Activated naive CD4-positive, alpha-beta T cell treated with anti-CD3 and anti-CD28 coated beads for 36 hours (primary cell): ENCODE measurements at regions of chr18 and their contacts with region 1.

Region 1: GRCh38 chr18:54149078-54149697 is 75.3 kb downstream of the MBD2 start:
- DNase-seq: peak; percentile 92
- H3K4me3 Mint-ChIP-seq: peak overlapping the region; percentile 35
- H3K27ac Mint-ChIP-seq: peak overlapping the region; percentile 97
- H3K4me1 Mint-ChIP-seq: peaks cover 45% of the 10 kb centered on the region
- H3K27me3 Mint-ChIP-seq: no peaks in the 10 kb centered on the region

Region 2: GRCh38 chr18:54086046-54086802 is 63.0 kb before region 1 on chr18:
- CTCF ChIA-PET with region 1: no interaction called
- intact Hi-C with region 1: loop called (anchors 1 kb)
- DNase-seq: peak; percentile 26
- H3K4me3 Mint-ChIP-seq: no peak overlapping the region
- H3K27ac Mint-ChIP-seq: no peak overlapping the region
- H3K4me1 Mint-ChIP-seq: peaks cover 15% of the 10 kb centered on the region
- H3K27me3 Mint-ChIP-seq: no peaks in the 10 kb centered on the region

Region 3: GRCh38 chr18:54163453-54163852 is 14.3 kb after region 1 on chr18:
- CTCF ChIA-PET with region 1: interaction called, 3 read pairs
- intact Hi-C with region 1: loop called (anchors 1 kb)
- DNase-seq: no peak
- H3K4me3 Mint-ChIP-seq: no peak overlapping the region
- H3K27ac Mint-ChIP-seq: peak overlapping the region; percentile 87
- H3K4me1 Mint-ChIP-seq: peaks cover 21% of the 10 kb centered on the region
- H3K27me3 Mint-ChIP-seq: no peaks in the 10 kb centered on the region

Region 4: DNA sequence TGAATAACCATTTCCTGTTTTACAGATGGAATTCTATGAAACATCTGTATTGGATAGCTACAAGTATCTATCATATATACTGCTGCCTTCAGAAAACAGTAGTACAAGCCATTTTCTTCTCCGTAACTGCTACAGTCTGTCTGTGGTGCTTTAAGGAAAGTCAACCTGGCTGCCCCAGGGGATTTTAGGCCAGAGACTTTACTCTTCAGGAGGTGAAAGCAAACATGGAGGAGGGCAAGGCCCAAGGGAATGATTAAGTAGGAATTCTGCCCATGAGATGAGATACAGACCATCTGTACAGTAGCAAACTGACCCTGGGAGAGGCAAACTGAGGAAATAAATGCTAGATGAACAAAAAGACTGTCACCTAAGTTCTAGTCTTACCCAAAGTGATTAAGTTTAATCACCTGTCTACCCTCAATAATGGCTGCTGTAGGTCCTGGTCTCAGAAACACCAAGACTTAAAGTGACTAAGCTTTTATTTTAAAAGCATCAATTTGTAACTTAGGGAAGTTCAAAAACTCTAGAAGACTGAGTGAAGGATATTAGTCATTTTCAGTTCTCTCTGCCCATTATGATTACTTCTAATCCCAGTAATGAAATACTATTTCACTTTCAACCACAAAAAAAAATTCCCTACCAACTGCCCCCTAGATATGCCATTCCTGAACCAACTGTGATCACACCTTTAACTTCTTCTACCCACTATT is 60.4 kb after region 1 on chr18:
- CTCF ChIA-PET with region 1: interaction called, 3 read pairs
- intact Hi-C with region 1: loop called (anchors 1 kb)
- DNase-seq: no peak
- H3K4me3 Mint-ChIP-seq: peak overlapping the region; percentile 50
- H3K27ac Mint-ChIP-seq: peak overlapping the region; percentile 88
- H3K4me1 Mint-ChIP-seq: peaks cover 54% of the 10 kb centered on the region
- H3K27me3 Mint-ChIP-seq: no peaks in the 10 kb centered on the region

Region 5: GRCh38 chr18:54269893-54270844 is 121.0 kb after region 1 on chr18:
- CTCF ChIA-PET with region 1: interaction called, 9 read pairs
- intact Hi-C with region 1: loop called (anchors 1 kb)
- DNase-seq: peak; percentile 62
- H3K4me3 Mint-ChIP-seq: peak overlapping the region; percentile 83
- H3K27ac Mint-ChIP-seq: peak overlapping the region; percentile 94
- H3K4me1 Mint-ChIP-seq: peaks cover 24% of the 10 kb centered on the region
- H3K27me3 Mint-ChIP-seq: no peaks in the 10 kb centered on the region

Region 6: DNA sequence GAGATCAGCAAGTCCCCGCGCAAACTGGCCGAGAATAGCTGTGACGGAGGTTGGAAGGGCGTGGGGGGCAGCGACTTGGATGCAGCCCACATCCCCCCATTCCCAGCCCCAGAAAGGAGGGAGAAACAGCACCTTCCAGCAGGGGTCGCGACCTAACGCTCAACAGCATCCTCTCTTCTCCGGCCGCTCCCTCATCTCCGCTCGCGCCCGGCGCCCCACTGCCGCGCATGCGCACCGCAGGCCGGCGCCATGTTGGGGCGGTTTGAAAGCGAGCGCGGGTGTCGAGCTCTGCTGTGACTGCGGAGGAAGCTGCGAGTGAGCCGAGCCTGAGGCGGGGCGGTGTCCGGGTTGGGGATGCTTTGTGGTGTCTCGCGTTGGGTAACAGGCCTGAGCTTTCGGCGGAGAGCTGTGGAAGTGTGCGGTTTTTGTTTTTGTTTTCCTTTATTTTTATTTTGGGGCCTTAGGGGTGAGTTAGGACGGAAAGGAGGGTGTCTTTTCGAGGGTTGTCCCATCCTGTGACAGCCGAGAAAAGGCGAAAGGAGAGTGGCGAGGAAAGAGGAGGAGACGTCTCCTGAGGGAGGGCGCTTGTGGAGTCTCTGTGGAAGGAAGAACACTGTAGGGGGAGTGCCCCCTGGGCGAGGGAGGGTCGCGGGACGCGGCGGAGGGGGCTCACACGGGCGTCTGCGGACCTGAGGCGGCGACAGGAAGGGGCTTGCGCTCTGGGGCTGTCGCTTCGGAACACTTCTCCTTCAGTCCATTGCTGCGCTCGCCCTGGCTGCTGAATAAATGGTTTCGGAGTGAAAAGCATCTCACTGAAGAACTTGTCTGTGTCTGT is 208.7 kb after region 1 on chr18 and contains the starts of genes C18orf54 and STARD6:
- CTCF ChIA-PET with region 1: no interaction called
- intact Hi-C with region 1: loop called (anchors 1 kb)
- DNase-seq: peak; percentile 89
- H3K4me3 Mint-ChIP-seq: peak within 1 kb of the TSS; percentile 100
- H3K27ac Mint-ChIP-seq: peak within 1 kb of the TSS; percentile 95
- H3K4me1 Mint-ChIP-seq: peaks cover 12% of the 10 kb centered on the region
- H3K27me3 Mint-ChIP-seq: peaks cover 5% of the 10 kb centered on the region
- total RNA-seq, gene C18orf54: 10.2 to 11.5 TPM
- total RNA-seq, gene STARD6: not detected

Region 7: GRCh38 chr18:54551590-54551989 is 402.4 kb after region 1 on chr18:
- CTCF ChIA-PET with region 1: no interaction called
- intact Hi-C with region 1: no loop called
- DNase-seq: no peak
- H3K4me3 Mint-ChIP-seq: no peak overlapping the region
- H3K27ac Mint-ChIP-seq: no peak overlapping the region
- H3K4me1 Mint-ChIP-seq: no peaks in the 10 kb centered on the region
- H3K27me3 Mint-ChIP-seq: no peaks in the 10 kb centered on the region

Region 8: GRCh38 chr18:56112013-56112749 is 1963.0 kb after region 1 on chr18:
- CTCF ChIA-PET with region 1: no interaction called
- intact Hi-C with region 1: loop called (anchors 5 kb)
- DNase-seq: peak; percentile 33
- H3K4me3 Mint-ChIP-seq: no peak overlapping the region
- H3K27ac Mint-ChIP-seq: no peak overlapping the region
- H3K4me1 Mint-ChIP-seq: peaks cover 3% of the 10 kb centered on the region
- H3K27me3 Mint-ChIP-seq: peaks cover 4% of the 10 kb centered on the region